Cardiac septum (tissue), 1 donor: ENCODE measurements at regions of chr15 and their contacts with region 1.

Region 1: GRCh38 chr15:32099956-32100684 is 69.8 kb downstream of the CHRNA7 start:
- DNase-seq: no peak

Region 2: DNA sequence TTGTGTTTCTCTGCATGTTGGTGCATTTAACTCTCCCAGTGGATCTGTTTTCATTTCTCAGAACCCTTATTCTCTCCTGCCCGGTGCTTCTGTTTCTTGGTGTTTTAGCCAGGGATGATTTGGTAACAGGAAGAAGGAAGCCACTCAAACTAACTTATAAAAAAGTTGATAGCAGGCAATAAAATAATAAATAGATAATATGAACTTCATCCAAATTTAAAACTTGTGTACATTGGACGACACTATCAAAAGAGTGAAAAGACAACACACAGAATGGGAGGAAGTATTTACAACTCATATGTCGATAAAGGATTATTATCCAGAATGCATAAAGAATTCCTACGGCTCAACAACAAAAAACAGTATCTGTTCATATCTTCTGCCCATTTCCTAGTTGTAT is 107.1 kb before region 1 on chr15:
- intact Hi-C with region 1: loop called (anchors 10 kb)
- DNase-seq: no peak

Region 3: GRCh38 chr15:32020156-32020555 is 80.0 kb before region 1 on chr15:
- intact Hi-C with region 1: no loop called
- DNase-seq: no peak

Region 4: DNA sequence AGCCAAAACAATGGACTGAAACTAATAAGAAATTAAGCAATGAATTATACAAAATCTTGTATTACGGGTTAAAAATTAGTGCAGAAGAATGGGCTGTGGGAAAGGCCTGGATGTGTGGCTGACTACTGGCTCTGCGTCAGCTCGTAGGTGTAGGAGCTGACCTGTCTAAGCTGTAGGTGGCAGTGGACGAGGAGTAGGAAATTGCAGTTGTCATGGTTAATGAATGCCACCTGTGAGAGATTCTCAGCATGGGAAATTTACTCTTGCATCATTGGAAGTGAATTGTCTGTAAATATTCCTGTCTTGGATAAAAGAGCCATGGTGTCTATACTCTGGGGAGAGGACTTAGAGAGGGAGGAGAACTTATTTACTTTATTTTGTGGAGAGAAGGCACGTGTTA is 46.4 kb before region 1 on chr15:
- intact Hi-C with region 1: no loop called
- DNase-seq: no peak

Region 5: GRCh38 chr15:32119694-32120330 is 19.7 kb after region 1 on chr15:
- intact Hi-C with region 1: no loop called
- DNase-seq: no peak